GM12878 (cell line): ENCODE measurements at regions of chr7 and their contacts with region 1.

Region 1: GRCh38 chr7:105589356-105590077 is 8.2 kb upstream of the EFCAB10 start:
- DNase-seq: peak; percentile 66
- ATAC-seq: peak; percentile 94
- H3K4me3 ChIP-seq: no peak overlapping the region
- H3K27ac ChIP-seq: no peak overlapping the region
- H3K4me1 ChIP-seq: peaks cover 14% of the 10 kb centered on the region
- H3K27me3 ChIP-seq: no peaks in the 10 kb centered on the region
- CTCF ChIP-seq: peak; percentile 66 to 90 (median 73); a peak in 5 of 6 replicates
- EP300 ChIP-seq: no peak
- POLR2A ChIP-seq: no peak
- RAD21 ChIP-seq: peak; percentile 83

Region 2: GRCh38 chr7:104814631-104815400 is 774.7 kb before region 1 on chr7:
- CTCF ChIA-PET with region 1: no interaction called
- POLR2A ChIA-PET with region 1: no interaction called
- RAD21 ChIA-PET with region 1: no interaction called
- SMC1A ChIA-PET with region 1: no interaction called
- in situ Hi-C with region 1: no loop called
- intact Hi-C with region 1: no loop called
- DNase-seq: no peak
- ATAC-seq: no peak
- H3K4me3 ChIP-seq: no peak overlapping the region
- H3K27ac ChIP-seq: no peak overlapping the region
- H3K4me1 ChIP-seq: no peaks in the 10 kb centered on the region
- H3K27me3 ChIP-seq: no peaks in the 10 kb centered on the region; a peak in 1 of 4 replicates
- CTCF ChIP-seq: no peak
- EP300 ChIP-seq: no peak
- POLR2A ChIP-seq: no peak
- RAD21 ChIP-seq: no peak

Region 3: GRCh38 chr7:105156731-105157130 is 432.8 kb before region 1 on chr7:
- CTCF ChIA-PET with region 1: no interaction called
- POLR2A ChIA-PET with region 1: no interaction called
- RAD21 ChIA-PET with region 1: no interaction called
- SMC1A ChIA-PET with region 1: no interaction called
- in situ Hi-C with region 1: no loop called
- intact Hi-C with region 1: loop called (anchors 5 kb)
- DNase-seq: no peak
- ATAC-seq: no peak
- H3K4me3 ChIP-seq: no peak overlapping the region
- H3K27ac ChIP-seq: no peak overlapping the region
- H3K4me1 ChIP-seq: no peaks in the 10 kb centered on the region
- H3K27me3 ChIP-seq: no peaks in the 10 kb centered on the region
- CTCF ChIP-seq: no peak
- EP300 ChIP-seq: no peak
- POLR2A ChIP-seq: no peak
- RAD21 ChIP-seq: no peak

Region 4: DNA sequence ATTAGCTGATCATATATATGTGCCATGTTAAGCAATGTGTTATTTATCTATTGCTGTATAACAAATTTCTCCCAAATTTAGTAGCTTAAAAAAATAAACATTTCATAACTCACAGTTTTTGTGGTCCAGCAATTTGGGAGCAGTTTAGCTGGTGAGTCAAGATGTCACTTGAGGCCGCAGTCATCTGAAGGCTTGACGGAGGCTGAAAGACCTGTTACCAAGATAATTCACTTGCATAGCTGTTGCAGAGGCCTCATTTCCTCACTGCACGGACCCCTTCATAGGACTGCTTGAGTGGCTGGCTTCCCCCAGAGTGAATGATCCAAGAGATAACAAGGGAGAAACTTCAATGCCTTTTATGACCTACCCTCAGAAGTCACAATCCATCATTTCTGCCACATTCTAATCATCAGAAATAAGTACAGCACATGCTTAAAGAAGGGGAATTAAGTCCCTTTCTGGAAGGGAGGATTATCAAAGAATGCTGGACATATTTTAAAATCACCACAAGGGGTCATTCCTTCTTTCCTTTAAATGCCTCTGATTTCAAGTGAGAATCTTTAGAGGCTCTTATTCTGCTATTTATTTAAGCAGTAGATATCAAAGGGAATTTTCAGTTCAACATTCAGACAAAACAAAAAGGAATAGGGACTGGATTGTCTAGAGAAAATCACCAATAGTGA is 190.3 kb before region 1 on chr7:
- CTCF ChIA-PET with region 1: interaction called, 15 read pairs
- POLR2A ChIA-PET with region 1: interaction called, 4 read pairs
- RAD21 ChIA-PET with region 1: no interaction called
- SMC1A ChIA-PET with region 1: interaction called, 3 read pairs
- in situ Hi-C with region 1: no loop called
- intact Hi-C with region 1: loop called (anchors 2 kb)
- DNase-seq: no peak
- ATAC-seq: peak; percentile 35; the same call in 1 of the 3 replicates
- H3K4me3 ChIP-seq: no peak overlapping the region
- H3K27ac ChIP-seq: no peak overlapping the region
- H3K4me1 ChIP-seq: no peaks in the 10 kb centered on the region
- H3K27me3 ChIP-seq: no peaks in the 10 kb centered on the region
- CTCF ChIP-seq: peak in 1 of 3 experiments; percentile 27; a peak in 2 of 6 replicates
- EP300 ChIP-seq: no peak
- POLR2A ChIP-seq: no peak
- RAD21 ChIP-seq: peak; percentile 28

Region 5: GRCh38 chr7:105429746-105430612 is 159.5 kb before region 1 on chr7:
- CTCF ChIA-PET with region 1: interaction called, 11 read pairs
- POLR2A ChIA-PET with region 1: no interaction called
- RAD21 ChIA-PET with region 1: interaction called, 5 read pairs
- SMC1A ChIA-PET with region 1: interaction called, 6 read pairs
- in situ Hi-C with region 1: no loop called
- intact Hi-C with region 1: no loop called
- DNase-seq: no peak
- ATAC-seq: peak; percentile 88
- H3K4me3 ChIP-seq: no peak overlapping the region
- H3K27ac ChIP-seq: no peak overlapping the region
- H3K4me1 ChIP-seq: no peaks in the 10 kb centered on the region
- H3K27me3 ChIP-seq: no peaks in the 10 kb centered on the region
- CTCF ChIP-seq: peak; percentile 46 to 66 (median 56)
- EP300 ChIP-seq: no peak
- POLR2A ChIP-seq: no peak
- RAD21 ChIP-seq: peak; percentile 76

Region 6: DNA sequence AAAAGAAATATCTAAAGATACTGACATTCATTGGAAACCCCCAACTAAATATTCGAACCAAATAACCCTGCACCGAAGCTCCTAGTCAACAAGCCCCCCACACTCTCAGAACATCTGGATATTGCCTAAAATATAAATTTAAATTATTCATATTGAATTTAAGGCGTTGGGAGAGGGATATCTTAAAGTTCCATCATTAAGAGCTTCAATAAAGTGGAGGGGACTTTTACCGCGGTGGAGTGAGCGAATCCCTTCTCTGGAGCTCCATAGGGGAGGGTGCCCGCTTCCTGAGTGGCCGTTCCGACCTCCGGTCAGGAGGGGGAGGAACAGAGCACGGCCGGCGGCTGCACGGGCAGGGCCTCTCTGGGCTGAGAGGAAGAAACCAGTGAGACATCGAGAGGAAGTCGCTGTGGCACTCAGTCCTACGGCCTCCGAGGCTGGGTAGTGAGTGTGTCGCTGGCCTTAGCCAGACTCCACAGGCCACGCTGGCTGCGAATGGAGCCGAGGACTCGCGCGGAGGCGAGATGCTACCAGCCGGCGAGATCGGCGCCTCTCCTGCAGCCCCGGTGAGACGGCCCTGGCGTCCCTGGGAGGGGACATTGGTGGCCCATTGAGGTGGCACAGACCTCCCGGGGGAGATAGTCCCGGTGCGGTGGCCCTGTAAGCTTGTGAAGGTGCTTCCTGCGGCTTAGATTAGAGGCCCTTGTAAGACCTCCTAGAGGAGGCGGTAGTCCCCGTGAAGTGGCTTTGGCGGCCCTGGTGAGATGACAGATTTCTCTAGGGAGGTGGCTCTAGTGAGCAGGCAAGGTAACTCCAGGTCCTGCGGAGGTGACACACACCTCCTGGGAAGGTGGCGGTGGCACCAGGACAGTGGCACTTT is 57.5 kb before region 1 on chr7 and contains the start of gene RINT1:
- CTCF ChIA-PET with region 1: interaction called, 24 read pairs
- POLR2A ChIA-PET with region 1: interaction called, 3 read pairs
- RAD21 ChIA-PET with region 1: interaction called, 24 read pairs
- SMC1A ChIA-PET with region 1: interaction called, 6 read pairs
- in situ Hi-C with region 1: no loop called
- intact Hi-C with region 1: loop called (anchors 5 kb)
- DNase-seq: peak; percentile 72
- ATAC-seq: peak; percentile 95
- H3K4me3 ChIP-seq: peak within 1 kb of the TSS; percentile 93
- H3K27ac ChIP-seq: peak within 1 kb of the TSS; percentile 51
- H3K4me1 ChIP-seq: peaks cover 3% of the 10 kb centered on the region
- H3K27me3 ChIP-seq: no peaks in the 10 kb centered on the region
- CTCF ChIP-seq: peak; percentile 84 to 95 (median 88)
- EP300 ChIP-seq: 0 out of 4 replicates have a peak, but pooled peaks of 1 of the 2 experiments have one; percentile 23
- POLR2A ChIP-seq: peak; percentile 100
- RAD21 ChIP-seq: no peak
- polyA plus RNA-seq, gene RINT1: 6.7 to 7.4 TPM

Region 7: DNA sequence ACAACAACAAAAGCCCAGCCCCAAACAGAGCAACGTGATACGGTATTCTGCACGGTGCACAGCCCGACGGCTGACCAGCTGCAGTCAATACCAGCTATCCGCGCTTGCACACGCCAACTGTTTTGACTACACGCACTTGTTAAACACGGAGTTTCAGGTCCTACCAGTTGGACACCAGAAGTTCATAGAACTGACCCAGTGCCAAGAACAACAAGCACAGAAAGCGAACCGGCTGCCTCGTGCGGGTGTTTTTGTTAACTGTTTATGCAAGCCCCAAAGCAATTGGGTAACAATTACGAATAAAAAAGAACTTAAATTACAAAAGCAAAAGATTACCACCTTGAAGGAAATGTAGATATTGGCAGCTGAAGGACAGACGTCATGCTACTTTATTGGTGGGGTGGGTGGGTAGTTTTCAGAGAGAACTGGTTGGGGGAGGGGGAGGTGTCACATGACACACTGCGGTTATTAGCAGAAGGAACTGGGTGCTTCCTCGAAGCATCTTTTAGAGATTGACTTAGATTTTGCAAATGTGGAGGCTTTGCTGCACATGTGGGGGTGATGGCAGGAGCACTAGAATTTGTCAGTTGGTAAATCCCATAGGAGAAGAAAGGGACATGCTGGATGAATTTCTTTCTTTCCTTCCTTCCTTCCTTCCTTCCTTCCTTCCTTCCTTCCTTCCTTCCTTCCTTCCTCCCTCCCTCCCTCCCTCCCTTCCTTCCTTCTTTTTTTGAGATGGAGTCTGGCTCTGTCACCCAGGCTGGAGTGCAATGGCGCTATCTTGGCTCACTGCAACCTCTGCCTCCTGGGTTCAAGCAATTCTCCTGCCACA is 102.4 kb after region 1 on chr7:
- CTCF ChIA-PET with region 1: no interaction called
- POLR2A ChIA-PET with region 1: no interaction called
- RAD21 ChIA-PET with region 1: no interaction called
- SMC1A ChIA-PET with region 1: no interaction called
- in situ Hi-C with region 1: no loop called
- intact Hi-C with region 1: no loop called
- DNase-seq: no peak
- ATAC-seq: peak; percentile 83
- H3K4me3 ChIP-seq: peak overlapping the region; percentile 69
- H3K27ac ChIP-seq: no peak overlapping the region
- H3K4me1 ChIP-seq: no peaks in the 10 kb centered on the region; the same call in 1 of the 2 replicates
- H3K27me3 ChIP-seq: no peaks in the 10 kb centered on the region
- CTCF ChIP-seq: no peak
- EP300 ChIP-seq: no peak
- POLR2A ChIP-seq: no peak
- RAD21 ChIP-seq: no peak

Region 8: GRCh38 chr7:106041140-106041717 is 451.7 kb after region 1 on chr7:
- CTCF ChIA-PET with region 1: no interaction called
- POLR2A ChIA-PET with region 1: no interaction called
- RAD21 ChIA-PET with region 1: no interaction called
- SMC1A ChIA-PET with region 1: no interaction called
- in situ Hi-C with region 1: no loop called
- intact Hi-C with region 1: no loop called
- DNase-seq: no peak
- ATAC-seq: peak; percentile 82
- H3K4me3 ChIP-seq: no peak overlapping the region
- H3K27ac ChIP-seq: no peak overlapping the region
- H3K4me1 ChIP-seq: no peaks in the 10 kb centered on the region
- H3K27me3 ChIP-seq: peaks cover 0 to 6% of the 10 kb centered on the region in 2 experiments; a peak in 2 of 4 replicates
- CTCF ChIP-seq: peak; percentile 56 to 85 (median 82)
- EP300 ChIP-seq: no peak
- POLR2A ChIP-seq: no peak
- RAD21 ChIP-seq: peak; percentile 20; the same call in 1 of the 2 replicates